ENCODE measurements at regions of chr17 and their contacts with region 1.

Region 1: DNA sequence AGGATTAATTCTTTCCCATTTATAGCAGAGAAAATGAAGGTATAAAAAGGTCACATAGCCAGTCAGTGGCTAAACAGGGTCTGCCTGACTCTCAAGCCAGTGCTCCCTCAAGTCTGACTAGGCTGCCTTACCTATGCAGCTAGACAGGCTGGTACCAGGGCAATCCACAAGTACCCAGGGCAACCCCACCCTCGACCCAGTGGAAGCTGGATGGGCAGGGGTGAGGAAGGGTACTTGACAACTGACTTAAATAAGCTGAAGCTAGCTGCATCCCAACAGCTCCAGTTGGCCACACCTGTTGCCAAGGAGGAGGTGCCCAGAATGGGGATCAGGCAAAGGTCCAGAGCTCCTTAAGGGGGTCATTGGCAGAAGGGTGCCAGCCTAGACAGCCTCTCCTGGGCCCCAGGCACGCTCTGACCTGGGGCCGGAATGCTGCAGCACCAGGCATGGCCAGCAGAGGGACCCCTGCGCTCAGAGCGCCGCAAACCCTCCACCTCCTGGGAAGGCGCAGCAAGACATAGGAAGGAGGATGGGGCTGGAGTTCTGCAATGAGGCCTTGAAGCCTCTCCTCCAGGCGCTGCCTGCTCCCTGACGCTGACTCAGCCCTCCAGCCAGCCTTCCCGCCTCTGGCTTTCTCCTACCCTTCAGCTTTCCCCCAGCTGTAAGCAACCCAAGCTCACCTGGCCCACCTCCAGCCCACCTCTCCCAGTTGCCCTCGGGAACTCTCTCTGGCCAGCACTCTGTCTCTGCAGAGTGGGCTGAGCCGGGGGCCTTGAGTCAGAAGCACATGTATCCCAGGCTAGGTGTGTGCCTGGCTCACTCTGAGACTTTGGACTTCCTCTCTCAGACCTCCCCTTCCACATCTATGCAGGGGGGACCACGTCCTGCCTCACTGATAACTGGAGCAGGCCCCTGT is 28.8 kb downstream of the MPP2 start:
- H3K4me3 ChIP-seq: no peak overlapping the region
- H3K27ac ChIP-seq: no peak overlapping the region
- H3K4me1 ChIP-seq: no peaks in the 10 kb centered on the region; the same call in 1 of the 2 replicates
- CTCF ChIP-seq: peak; percentile 98

Region 2: DNA sequence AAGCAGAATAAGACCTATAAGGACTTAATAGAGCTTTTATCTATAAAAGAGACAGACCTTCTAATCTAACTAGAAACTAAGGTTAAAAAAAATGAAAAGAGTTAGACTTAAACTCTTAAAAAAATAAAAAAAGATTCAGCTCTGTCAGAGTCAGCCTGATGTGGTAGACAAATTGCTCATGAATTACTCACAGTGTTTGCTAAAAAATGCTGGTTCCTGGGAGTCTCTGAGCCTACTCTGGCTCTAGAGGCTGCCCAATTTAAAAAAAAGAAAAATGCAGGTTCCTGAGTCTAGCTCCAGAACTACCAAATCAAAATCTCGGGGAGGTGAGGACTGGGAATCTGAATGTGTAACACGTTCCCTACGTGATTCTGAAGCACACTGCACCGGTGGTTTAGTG is 138.0 kb before region 1 on chr17:
- CTCF ChIA-PET with region 1: no interaction called
- POLR2A ChIA-PET with region 1: no interaction called
- H3K4me3 ChIP-seq: no peak overlapping the region
- H3K27ac ChIP-seq: no peak overlapping the region
- H3K4me1 ChIP-seq: no peaks in the 10 kb centered on the region
- CTCF ChIP-seq: no peak

Region 3: DNA sequence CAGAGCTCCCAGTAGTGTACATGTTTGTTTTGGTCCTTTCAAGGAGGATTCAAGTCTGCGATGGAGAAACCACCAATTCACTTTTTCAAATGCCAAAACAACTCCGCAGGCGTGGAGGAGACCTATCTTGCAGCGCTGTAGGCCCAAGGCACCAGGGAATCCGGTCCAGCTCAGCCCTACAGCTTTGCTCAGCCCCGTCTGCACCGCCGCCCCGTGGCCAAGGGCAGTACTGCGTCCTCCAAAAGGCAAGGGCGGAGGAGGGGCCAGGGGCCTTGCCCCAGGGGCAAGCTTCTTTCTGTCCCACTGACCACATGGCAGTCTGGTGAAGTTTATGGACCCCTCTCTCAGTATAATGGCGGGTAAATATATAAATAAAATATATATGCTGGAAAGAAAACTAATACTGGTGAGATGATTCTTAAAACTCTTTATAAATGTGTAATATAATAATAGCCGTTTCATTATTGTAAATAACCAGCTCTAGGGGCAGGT is 32.3 kb before region 1 on chr17:
- CTCF ChIA-PET with region 1: interaction called, 22 read pairs
- POLR2A ChIA-PET with region 1: no interaction called
- H3K4me3 ChIP-seq: no peak overlapping the region
- H3K27ac ChIP-seq: no peak overlapping the region
- H3K4me1 ChIP-seq: peaks cover under 1% of the 10 kb centered on the region
- CTCF ChIP-seq: peak; percentile 80

Region 4: DNA sequence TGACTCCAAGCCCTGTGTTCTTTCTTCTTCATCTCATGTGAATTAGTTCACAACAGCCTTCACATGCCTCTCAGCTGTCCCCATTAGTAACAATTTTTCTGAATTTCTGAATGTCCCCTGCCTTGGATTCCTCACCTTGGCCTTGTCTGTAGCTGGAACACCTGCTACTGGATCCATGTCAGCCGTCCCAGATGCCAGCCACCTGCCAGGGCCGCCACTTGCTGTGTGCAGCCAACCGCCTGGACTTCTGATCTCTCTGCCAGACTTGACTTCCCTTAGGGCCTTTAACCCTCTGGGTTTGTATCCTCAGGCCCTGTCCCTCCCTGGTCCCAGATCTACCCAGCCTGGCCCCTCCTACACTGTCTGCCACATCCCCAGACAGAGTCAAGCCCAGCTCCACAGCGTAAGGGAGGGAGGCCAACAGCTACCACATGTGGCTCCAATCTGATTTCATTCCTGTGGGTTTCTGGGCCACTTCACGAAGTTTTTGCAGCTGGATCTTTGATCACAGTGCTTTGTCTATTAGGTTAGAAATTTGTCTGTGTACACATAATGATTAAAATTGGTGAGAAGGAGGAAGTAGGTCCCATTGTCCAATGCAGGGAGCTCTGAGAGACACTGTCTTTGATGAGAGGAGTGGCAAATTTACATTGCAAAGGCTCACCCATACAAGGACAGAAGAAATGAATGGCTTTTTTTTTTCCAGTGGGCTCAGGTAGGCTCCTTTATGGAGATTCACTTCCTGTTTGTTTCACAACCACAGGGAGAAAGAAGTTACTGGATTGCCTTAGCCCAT is 13.5 kb after region 1 on chr17:
- CTCF ChIA-PET with region 1: interaction called, 106 read pairs
- POLR2A ChIA-PET with region 1: interaction called, 3 read pairs
- H3K4me3 ChIP-seq: no peak overlapping the region
- H3K27ac ChIP-seq: no peak overlapping the region
- H3K4me1 ChIP-seq: no peaks in the 10 kb centered on the region
- CTCF ChIP-seq: no peak

Region 5: GRCh38 chr17:43915559-43915958 is 37.0 kb after region 1 on chr17:
- CTCF ChIA-PET with region 1: interaction called, 53 read pairs
- POLR2A ChIA-PET with region 1: no interaction called
- H3K4me3 ChIP-seq: no peak overlapping the region
- H3K27ac ChIP-seq: no peak overlapping the region
- H3K4me1 ChIP-seq: no peaks in the 10 kb centered on the region
- CTCF ChIP-seq: no peak

Region 6: GRCh38 chr17:43983515-43984411 is 105.2 kb after region 1 on chr17:
- CTCF ChIA-PET with region 1: interaction called, 12 read pairs
- POLR2A ChIA-PET with region 1: no interaction called
- H3K4me3 ChIP-seq: peak overlapping the region; percentile 31
- H3K27ac ChIP-seq: no peak overlapping the region; the same call in 1 of the 2 replicates
- H3K4me1 ChIP-seq: no peaks in the 10 kb centered on the region; the same call in 1 of the 2 replicates
- CTCF ChIP-seq: peak; percentile 65

Region 7: GRCh38 chr17:44518032-44518431 is 639.5 kb after region 1 on chr17:
- CTCF ChIA-PET with region 1: no interaction called
- POLR2A ChIA-PET with region 1: no interaction called
- H3K4me3 ChIP-seq: no peak overlapping the region
- H3K27ac ChIP-seq: no peak overlapping the region
- H3K4me1 ChIP-seq: no peaks in the 10 kb centered on the region
- CTCF ChIP-seq: no peak

Measured in HEK293 (cell line).